ENCODE measurements at regions of chr4 and their contacts with region 1.

Region 1: DNA sequence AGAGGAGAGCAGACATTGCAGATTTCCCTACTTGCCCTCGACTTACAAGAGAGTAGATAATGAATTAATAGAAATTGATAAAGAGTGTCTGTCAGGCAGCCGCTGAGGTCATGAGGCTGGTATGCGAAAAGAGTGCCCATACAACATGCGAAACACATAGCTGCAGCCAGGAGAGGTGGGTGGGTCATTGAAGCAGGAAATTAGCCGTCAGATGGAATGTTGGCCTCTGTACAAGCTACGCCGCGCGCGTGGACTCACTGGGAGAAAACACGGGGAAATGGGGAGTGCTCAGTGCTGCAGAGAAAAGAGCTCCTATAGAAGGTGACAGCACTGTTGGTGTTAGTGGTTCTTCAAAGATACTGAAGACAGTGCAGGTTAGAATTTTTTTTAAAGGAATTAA is 125.1 kb downstream of the RAPGEF2 start:
- DNase-seq: peak; percentile 62
- H3K4me3 Mint-ChIP-seq: peak overlapping the region; percentile 67
- H3K27ac Mint-ChIP-seq: peak overlapping the region; percentile 73
- H3K4me1 Mint-ChIP-seq: peaks cover 19% of the 10 kb centered on the region
- H3K27me3 Mint-ChIP-seq: no peaks in the 10 kb centered on the region
- CTCF ChIP-seq: no peak

Region 2: GRCh38 chr4:159298502-159298901 is 70.5 kb after region 1 on chr4:
- CTCF ChIA-PET with region 1: no interaction called
- intact Hi-C with region 1: loop called (anchors 5 kb)
- DNase-seq: no peak
- H3K4me3 Mint-ChIP-seq: no peak overlapping the region
- H3K27ac Mint-ChIP-seq: peak overlapping the region; percentile 16
- H3K4me1 Mint-ChIP-seq: peaks cover 40% of the 10 kb centered on the region
- H3K27me3 Mint-ChIP-seq: no peaks in the 10 kb centered on the region
- CTCF ChIP-seq: no peak

Measured in Calu3 (cell line).